Activated T-helper 1 cell treated with anti-CD3 and anti-CD28 coated beads, Interleukin-12 subunit alpha, Interleukin-12 subunit beta, Interleukin-2, Interleukin-4 antibody, amounts not matched to agents 30 ng/mL and 10 ng/mL and 1 ng/mL, durations not matched to agents 14 hours and 24 hours and 36 hours (primary cell): ENCODE measurements at regions of chr10 and their contacts with region 1.

Region 1: DNA sequence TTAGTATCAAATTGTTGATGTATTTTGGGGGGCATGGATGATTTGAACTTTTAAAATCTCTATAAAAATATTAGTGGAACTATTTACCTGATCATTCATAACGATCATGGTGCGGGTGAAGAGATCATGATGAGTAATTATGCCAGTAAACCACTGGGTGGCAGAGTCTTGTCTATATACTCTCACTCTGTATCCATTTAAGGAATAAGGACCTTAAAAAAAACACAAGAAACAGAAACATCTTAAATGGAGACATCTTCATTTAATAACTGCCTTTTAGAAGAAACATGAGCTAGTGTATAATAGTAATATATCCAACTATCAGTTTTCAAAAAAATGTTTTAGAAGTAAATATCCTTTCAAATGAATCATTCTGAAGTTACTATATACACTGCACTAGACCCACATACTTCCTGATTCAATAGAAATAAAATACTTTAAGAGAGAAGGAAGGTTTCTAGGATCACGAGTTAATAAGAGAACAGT is 84.0 kb downstream of the NRBF2 start:
- DNase-seq: no peak
- H3K4me3 Mint-ChIP-seq: no peak overlapping the region
- H3K27ac Mint-ChIP-seq: peak overlapping the region; percentile 13
- H3K4me1 Mint-ChIP-seq: peaks cover 51% of the 10 kb centered on the region
- H3K27me3 Mint-ChIP-seq: no peaks in the 10 kb centered on the region

Region 2: GRCh38 chr10:62231371-62231770 is 985.8 kb before region 1 on chr10:
- intact Hi-C with region 1: no loop called
- DNase-seq: no peak
- H3K4me3 Mint-ChIP-seq: no peak overlapping the region
- H3K27ac Mint-ChIP-seq: no peak overlapping the region
- H3K4me1 Mint-ChIP-seq: peaks cover 15% of the 10 kb centered on the region
- H3K27me3 Mint-ChIP-seq: no peaks in the 10 kb centered on the region

Region 3: DNA sequence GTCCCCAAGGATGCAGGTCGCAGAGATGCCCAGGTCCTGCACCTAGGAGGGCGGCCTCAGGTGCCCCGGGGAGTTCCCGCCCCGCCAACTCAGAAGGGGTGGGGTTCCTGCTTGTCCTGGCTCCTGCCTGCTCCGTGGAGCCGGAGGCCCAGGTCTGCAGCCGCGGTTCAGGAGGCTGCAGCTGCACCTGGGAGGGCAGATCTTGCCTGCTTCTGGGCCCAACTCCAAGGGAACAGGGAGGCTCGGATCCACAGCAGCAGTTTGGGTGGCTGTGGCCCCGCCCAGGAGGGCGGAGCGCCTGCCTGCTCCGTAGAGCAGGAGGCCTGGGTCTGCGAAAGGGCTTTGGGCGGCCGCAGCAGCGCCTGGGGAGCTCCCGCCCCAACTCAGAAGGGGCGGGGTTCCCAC is 292.8 kb before region 1 on chr10:
- intact Hi-C with region 1: no loop called
- DNase-seq: no peak
- H3K4me3 Mint-ChIP-seq: no peak overlapping the region
- H3K27ac Mint-ChIP-seq: no peak overlapping the region
- H3K4me1 Mint-ChIP-seq: no peaks in the 10 kb centered on the region
- H3K27me3 Mint-ChIP-seq: peaks cover 4% of the 10 kb centered on the region

Region 4: GRCh38 chr10:63227207-63227915 is 10.2 kb after region 1 on chr10:
- intact Hi-C with region 1: loop called (anchors 1 kb)
- DNase-seq: no peak
- H3K4me3 Mint-ChIP-seq: peak overlapping the region; percentile 61
- H3K27ac Mint-ChIP-seq: peak overlapping the region; percentile 79
- H3K4me1 Mint-ChIP-seq: peaks cover 34% of the 10 kb centered on the region
- H3K27me3 Mint-ChIP-seq: no peaks in the 10 kb centered on the region

Region 5: DNA sequence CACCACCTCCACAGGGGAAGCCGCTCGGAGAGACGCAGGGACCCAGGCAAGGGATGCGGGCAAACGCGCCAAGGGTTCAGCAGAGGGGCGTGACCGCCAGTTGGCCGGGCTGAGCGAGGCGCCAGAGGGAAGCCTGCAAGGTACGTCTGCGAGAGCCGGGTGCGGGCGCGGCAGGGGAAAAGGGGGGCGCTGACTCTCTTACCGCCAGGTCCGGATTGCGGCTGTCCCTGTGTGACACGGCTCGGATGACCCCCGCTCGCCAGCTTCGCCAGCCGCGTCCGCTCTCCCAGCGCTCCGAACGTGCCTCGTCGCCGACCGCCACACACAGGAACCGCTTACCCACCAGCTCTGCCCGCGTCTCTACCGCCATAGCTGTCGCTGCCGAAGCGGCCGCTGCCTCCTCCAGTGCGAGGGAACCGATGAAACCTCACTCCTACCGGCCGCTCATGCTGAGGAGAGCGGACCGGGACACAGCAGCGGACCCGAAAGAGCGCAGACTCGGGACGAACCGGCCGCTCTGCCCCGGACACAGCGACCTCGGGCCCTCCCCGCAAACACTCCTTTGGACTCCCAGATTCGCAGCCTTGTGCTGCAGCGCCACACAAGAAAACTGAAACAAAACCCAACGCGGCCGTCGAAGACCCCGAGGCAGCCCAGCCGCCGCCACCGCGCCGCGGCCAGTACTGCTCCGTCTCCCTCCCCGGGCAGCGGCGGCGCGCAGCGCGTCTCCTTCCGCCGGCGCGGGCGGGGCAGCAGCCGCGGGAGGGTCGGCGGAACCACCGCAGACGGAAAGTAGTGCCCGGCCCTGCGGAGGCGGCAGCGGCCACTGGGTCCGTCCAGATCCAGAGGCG is 248.4 kb after region 1 on chr10 and contains the start of gene JMJD1C:
- intact Hi-C with region 1: loop called (anchors 5 kb)
- DNase-seq: peak; percentile 47
- H3K4me3 Mint-ChIP-seq: peak within 1 kb of the TSS; percentile 90
- H3K27ac Mint-ChIP-seq: peak within 1 kb of the TSS; percentile 68
- H3K4me1 Mint-ChIP-seq: peaks cover 21% of the 10 kb centered on the region
- H3K27me3 Mint-ChIP-seq: peaks cover 28% of the 10 kb centered on the region
- total RNA-seq, gene JMJD1C: 47.3 and 48.0 TPM in 2 replicates

Region 6: GRCh38 chr10:63720072-63720537 is 502.9 kb after region 1 on chr10:
- intact Hi-C with region 1: loop called (anchors 1 kb)
- DNase-seq: peak; percentile 17
- H3K4me3 Mint-ChIP-seq: peak overlapping the region; percentile 51
- H3K27ac Mint-ChIP-seq: no peak overlapping the region
- H3K4me1 Mint-ChIP-seq: peaks cover 34% of the 10 kb centered on the region
- H3K27me3 Mint-ChIP-seq: peaks cover 4% of the 10 kb centered on the region